ENCODE measurements at regions of chr6 and their contacts with region 1.

Region 1: DNA sequence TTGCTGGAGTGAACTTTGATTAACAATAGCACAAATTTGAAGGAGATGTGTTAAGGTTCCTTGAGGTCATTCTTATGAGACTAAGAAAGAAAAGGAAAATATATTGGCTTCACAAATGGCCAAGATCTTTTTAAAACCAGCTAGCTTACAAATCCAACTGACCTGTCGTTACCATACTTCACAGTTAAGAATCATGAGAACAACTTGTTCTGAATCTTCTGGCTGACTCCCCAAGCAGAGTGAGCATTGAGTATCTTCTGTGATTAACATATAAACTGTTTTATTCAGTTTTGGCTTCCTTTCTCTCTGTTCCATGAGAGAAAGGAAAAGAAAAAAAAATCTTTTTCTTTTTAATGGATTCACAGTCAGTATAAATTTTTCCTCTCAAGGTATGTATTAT is 277.1 kb downstream of the KHDC1L start:
- DNase-seq: no peak
- ATAC-seq: peak; percentile 45

Region 2: GRCh38 chr6:73004861-73005260 is 56.7 kb after region 1 on chr6:
- intact Hi-C with region 1: loop called (anchors 2 kb)
- DNase-seq: no peak
- ATAC-seq: no peak